B cell (primary cell): ENCODE measurements at regions of chr3 and their contacts with region 1.

Region 1: DNA sequence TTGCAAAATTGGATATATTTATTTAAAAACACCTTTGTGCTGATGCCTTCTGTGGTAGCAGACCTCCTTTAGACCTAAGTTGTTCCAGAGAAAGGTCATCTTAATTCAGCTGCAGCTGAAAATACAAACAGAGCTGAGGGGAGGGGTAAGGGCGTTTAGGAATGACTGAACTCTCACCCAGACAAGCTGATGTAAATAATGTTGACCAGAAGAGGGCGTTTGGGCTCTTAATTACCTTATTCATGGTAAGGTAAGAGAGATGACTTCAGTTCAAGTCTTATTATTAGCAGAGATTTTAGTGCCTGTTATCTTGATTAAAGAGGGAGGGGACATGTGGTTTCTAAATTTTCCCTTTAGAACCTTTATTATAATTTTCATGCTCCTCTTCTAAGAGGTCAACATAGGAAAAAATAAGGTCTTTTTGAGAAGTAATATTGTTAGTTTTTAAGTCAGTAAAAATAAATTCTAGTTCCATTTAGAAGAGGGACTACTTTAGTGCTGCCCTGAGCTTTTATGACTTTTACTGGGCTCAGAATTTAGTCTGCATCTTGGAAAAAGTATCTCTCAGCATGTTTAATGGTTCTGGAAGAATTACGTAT is 46.3 kb downstream of the GPR171 start:
- DNase-seq: peak; percentile 71
- ATAC-seq: peak; percentile 78
- H3K4me3 ChIP-seq: no peak overlapping the region
- H3K4me3 Mint-ChIP-seq: no peak overlapping the region
- H3K27ac ChIP-seq: no peak overlapping the region
- H3K27ac Mint-ChIP-seq: no peak overlapping the region
- H3K4me1 ChIP-seq: no peaks in the 10 kb centered on the region
- H3K4me1 Mint-ChIP-seq: no peaks in the 10 kb centered on the region
- H3K27me3 ChIP-seq: no peaks in the 10 kb centered on the region
- H3K27me3 Mint-ChIP-seq: no peaks in the 10 kb centered on the region
- CTCF ChIP-seq: peak; percentile 74

Region 2: GRCh38 chr3:151265866-151266265 is 109.1 kb after region 1 on chr3:
- CTCF ChIA-PET with region 1: no interaction called
- POLR2A ChIA-PET with region 1: no interaction called
- intact Hi-C with region 1: no loop called
- DNase-seq: peak; percentile 95
- ATAC-seq: peak; percentile 89
- H3K4me3 ChIP-seq: peak overlapping the region in 1 of 5 experiments; percentile 34
- H3K4me3 Mint-ChIP-seq: peak overlapping the region; percentile 66
- H3K27ac ChIP-seq: peak overlapping the region; percentile 97 to 99
- H3K27ac Mint-ChIP-seq: peak overlapping the region; percentile 99
- H3K4me1 ChIP-seq: peaks cover 44 to 53% of the 10 kb centered on the region in 2 donors
- H3K4me1 Mint-ChIP-seq: peaks cover 66% of the 10 kb centered on the region
- H3K27me3 ChIP-seq: no peaks in the 10 kb centered on the region
- H3K27me3 Mint-ChIP-seq: no peaks in the 10 kb centered on the region
- CTCF ChIP-seq: no peak

Region 3: DNA sequence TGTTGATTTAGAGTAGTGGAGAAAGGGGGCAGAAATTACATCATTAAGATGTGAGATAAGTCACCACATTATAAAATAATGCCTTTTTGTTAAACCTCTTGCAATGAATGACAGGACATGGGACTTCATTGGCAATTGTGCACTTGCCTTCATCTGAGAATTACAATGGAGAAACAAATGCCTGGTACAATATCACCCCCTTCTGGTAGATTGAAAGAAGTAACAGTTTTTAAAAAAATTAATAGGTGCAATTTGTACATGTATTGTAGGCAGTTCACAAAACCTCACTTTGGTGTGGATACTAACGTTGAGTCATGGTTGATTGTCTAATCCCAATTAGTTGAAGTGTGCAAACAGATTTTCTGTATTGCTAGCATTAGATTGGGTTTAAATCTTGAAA is 126.2 kb after region 1 on chr3:
- CTCF ChIA-PET with region 1: interaction called, 12 read pairs
- POLR2A ChIA-PET with region 1: no interaction called
- intact Hi-C with region 1: loop called (anchors 1 kb)
- DNase-seq: peak; percentile 78
- ATAC-seq: peak; percentile 17
- H3K4me3 ChIP-seq: no peak overlapping the region
- H3K4me3 Mint-ChIP-seq: no peak overlapping the region
- H3K27ac ChIP-seq: no peak overlapping the region
- H3K27ac Mint-ChIP-seq: no peak overlapping the region
- H3K4me1 ChIP-seq: peaks cover 30 to 31% of the 10 kb centered on the region in 2 donors
- H3K4me1 Mint-ChIP-seq: peaks cover 28% of the 10 kb centered on the region
- H3K27me3 ChIP-seq: no peaks in the 10 kb centered on the region
- H3K27me3 Mint-ChIP-seq: no peaks in the 10 kb centered on the region
- CTCF ChIP-seq: peak; percentile 84

Region 4: GRCh38 chr3:151538456-151539393 is 382.0 kb after region 1 on chr3:
- CTCF ChIA-PET with region 1: no interaction called
- POLR2A ChIA-PET with region 1: no interaction called
- intact Hi-C with region 1: no loop called
- DNase-seq: no peak
- ATAC-seq: no peak
- H3K4me3 ChIP-seq: no peak overlapping the region
- H3K4me3 Mint-ChIP-seq: no peak overlapping the region
- H3K27ac ChIP-seq: no peak overlapping the region
- H3K27ac Mint-ChIP-seq: no peak overlapping the region
- H3K4me1 ChIP-seq: no peaks in the 10 kb centered on the region
- H3K4me1 Mint-ChIP-seq: no peaks in the 10 kb centered on the region
- H3K27me3 ChIP-seq: no peaks in the 10 kb centered on the region
- H3K27me3 Mint-ChIP-seq: no peaks in the 10 kb centered on the region
- CTCF ChIP-seq: no peak

Region 5: GRCh38 chr3:151838583-151839312 is 682.0 kb after region 1 on chr3:
- CTCF ChIA-PET with region 1: interaction called, 4 read pairs
- POLR2A ChIA-PET with region 1: no interaction called
- intact Hi-C with region 1: loop called (anchors 2 kb)
- DNase-seq: peak; percentile 69
- ATAC-seq: peak; percentile 65
- H3K4me3 ChIP-seq: no peak overlapping the region
- H3K4me3 Mint-ChIP-seq: no peak overlapping the region
- H3K27ac ChIP-seq: no peak overlapping the region
- H3K27ac Mint-ChIP-seq: no peak overlapping the region
- H3K4me1 ChIP-seq: no peaks in the 10 kb centered on the region
- H3K4me1 Mint-ChIP-seq: peaks cover 3% of the 10 kb centered on the region
- H3K27me3 ChIP-seq: no peaks in the 10 kb centered on the region
- H3K27me3 Mint-ChIP-seq: peaks cover 5% of the 10 kb centered on the region
- CTCF ChIP-seq: peak; percentile 83

Region 6: GRCh38 chr3:151918253-151919029 is 761.7 kb after region 1 on chr3:
- CTCF ChIA-PET with region 1: no interaction called
- POLR2A ChIA-PET with region 1: no interaction called
- intact Hi-C with region 1: loop called (anchors 5 kb)
- DNase-seq: peak; percentile 40
- ATAC-seq: no peak
- H3K4me3 ChIP-seq: no peak overlapping the region
- H3K4me3 Mint-ChIP-seq: no peak overlapping the region
- H3K27ac ChIP-seq: no peak overlapping the region
- H3K27ac Mint-ChIP-seq: no peak overlapping the region
- H3K4me1 ChIP-seq: no peaks in the 10 kb centered on the region
- H3K4me1 Mint-ChIP-seq: no peaks in the 10 kb centered on the region
- H3K27me3 ChIP-seq: no peaks in the 10 kb centered on the region
- H3K27me3 Mint-ChIP-seq: no peaks in the 10 kb centered on the region
- CTCF ChIP-seq: peak; percentile 65